ENCODE measurements at regions of chr3 and their contacts with region 1.

Region 1: DNA sequence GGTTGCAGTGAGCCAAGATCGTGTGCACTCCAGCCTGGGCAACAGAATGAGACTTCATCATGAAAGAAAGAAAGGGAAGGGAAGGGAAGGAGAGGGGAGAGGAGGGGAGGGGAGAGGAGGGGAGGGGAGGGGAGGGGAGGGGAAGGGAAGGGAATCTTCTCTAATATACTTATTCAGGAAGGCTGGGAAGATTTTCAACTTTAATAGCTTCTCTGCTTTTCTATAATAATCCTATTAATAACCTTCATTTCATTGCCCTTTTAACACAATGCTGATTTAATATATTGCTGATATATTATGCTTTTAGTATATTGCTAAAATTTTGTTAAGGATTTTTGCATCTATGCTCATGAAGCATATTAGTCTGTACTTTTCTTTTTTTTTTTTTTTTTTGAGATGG is 23.4 kb upstream of the RNF7 start:
- DNase-seq: no peak
- ATAC-seq: no peak
- H3K4me3 Mint-ChIP-seq: no peak overlapping the region
- H3K27ac Mint-ChIP-seq: no peak overlapping the region
- H3K4me1 Mint-ChIP-seq: no peaks in the 10 kb centered on the region
- H3K27me3 Mint-ChIP-seq: no peaks in the 10 kb centered on the region
- CTCF ChIP-seq: no peak

Region 2: DNA sequence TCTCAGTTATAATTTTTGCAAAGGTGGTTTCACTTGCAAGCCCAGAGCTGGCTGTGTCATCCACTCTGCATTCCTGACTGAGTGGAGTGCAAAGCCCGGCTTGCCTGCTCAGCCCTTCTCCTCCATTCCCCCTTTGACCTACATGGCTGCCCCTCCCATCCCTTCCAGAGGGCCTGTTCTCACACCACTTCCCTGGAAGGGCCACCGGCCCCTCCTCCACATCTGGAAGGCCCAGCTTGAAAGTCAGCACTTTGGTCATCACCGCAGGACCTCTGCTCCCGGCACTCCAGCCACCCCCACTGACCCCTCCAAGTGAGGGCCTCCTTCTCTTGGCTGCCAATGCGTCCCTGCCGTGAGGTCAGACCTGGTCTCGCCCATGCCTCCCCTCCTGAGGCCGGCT is 50.7 kb before region 1 on chr3:
- CTCF ChIA-PET with region 1: no interaction called
- POLR2A ChIA-PET with region 1: no interaction called
- intact Hi-C with region 1: no loop called
- DNase-seq: no peak
- ATAC-seq: no peak
- H3K4me3 Mint-ChIP-seq: no peak overlapping the region
- H3K27ac Mint-ChIP-seq: no peak overlapping the region
- H3K4me1 Mint-ChIP-seq: peaks cover 5% of the 10 kb centered on the region
- H3K27me3 Mint-ChIP-seq: peaks cover 29% of the 10 kb centered on the region
- CTCF ChIP-seq: no peak

Region 3: DNA sequence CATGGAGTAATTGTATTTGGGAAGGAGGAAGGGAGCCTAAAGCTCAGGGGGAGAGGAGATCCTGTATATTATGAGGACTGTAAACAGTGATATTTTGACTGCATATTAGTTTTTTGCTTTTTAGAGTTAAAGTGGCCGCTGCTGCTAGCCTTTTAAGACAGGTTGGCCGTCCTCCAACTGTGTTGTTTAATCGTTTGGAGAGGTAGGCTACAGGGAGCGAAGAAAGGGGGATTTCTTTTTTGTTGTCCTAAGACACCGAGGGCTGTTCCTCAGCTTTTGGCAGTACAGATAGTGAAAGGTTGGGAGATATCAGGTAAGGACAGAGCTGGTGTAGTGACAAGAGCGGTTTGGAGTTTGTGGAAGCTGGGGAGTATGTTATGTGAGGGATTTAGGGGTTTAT is 14.8 kb before region 1 on chr3:
- CTCF ChIA-PET with region 1: no interaction called
- POLR2A ChIA-PET with region 1: no interaction called
- intact Hi-C with region 1: loop called (anchors 1 kb)
- DNase-seq: no peak
- ATAC-seq: no peak
- H3K4me3 Mint-ChIP-seq: no peak overlapping the region
- H3K27ac Mint-ChIP-seq: no peak overlapping the region
- H3K4me1 Mint-ChIP-seq: no peaks in the 10 kb centered on the region
- H3K27me3 Mint-ChIP-seq: no peaks in the 10 kb centered on the region
- CTCF ChIP-seq: no peak

Measured in activated CD8-positive, alpha-beta T cell treated with anti-CD3 and anti-CD28 coated beads for 36 hours (primary cell).